ENCODE measurements at regions of chr3 and their contacts with region 1.

Region 1: GRCh38 chr3:52339612-52340011 is 23.5 kb downstream of the DNAH1 start:
- DNase-seq: peak; percentile 64
- H3K4me3 Mint-ChIP-seq: no peak overlapping the region
- H3K27ac Mint-ChIP-seq: no peak overlapping the region
- H3K4me1 Mint-ChIP-seq: peaks cover 3% of the 10 kb centered on the region
- H3K27me3 Mint-ChIP-seq: no peaks in the 10 kb centered on the region

Region 2: GRCh38 chr3:52001443-52001974 is 338.1 kb before region 1 on chr3:
- CTCF ChIA-PET with region 1: interaction called, 5 read pairs
- intact Hi-C with region 1: loop called (anchors 2 kb)
- DNase-seq: peak; percentile 87
- H3K4me3 Mint-ChIP-seq: no peak overlapping the region
- H3K27ac Mint-ChIP-seq: no peak overlapping the region
- H3K4me1 Mint-ChIP-seq: peaks cover 9% of the 10 kb centered on the region
- H3K27me3 Mint-ChIP-seq: no peaks in the 10 kb centered on the region

Region 3: GRCh38 chr3:52220380-52221026 is 119.1 kb before region 1 on chr3:
- CTCF ChIA-PET with region 1: interaction called, 314 read pairs
- intact Hi-C with region 1: loop called (anchors 1 kb)
- DNase-seq: peak; percentile 97
- H3K4me3 Mint-ChIP-seq: no peak overlapping the region
- H3K27ac Mint-ChIP-seq: no peak overlapping the region
- H3K4me1 Mint-ChIP-seq: peaks cover 82% of the 10 kb centered on the region
- H3K27me3 Mint-ChIP-seq: no peaks in the 10 kb centered on the region

Region 4: GRCh38 chr3:52238761-52239701 is 100.6 kb before region 1 on chr3 and contains the start of gene TWF2:
- CTCF ChIA-PET with region 1: interaction called, 147 read pairs
- intact Hi-C with region 1: no loop called
- DNase-seq: peak; percentile 83
- H3K4me3 Mint-ChIP-seq: peak within 1 kb of the TSS; percentile 92
- H3K27ac Mint-ChIP-seq: peak within 1 kb of the TSS; percentile 98
- H3K4me1 Mint-ChIP-seq: peaks cover 75% of the 10 kb centered on the region
- H3K27me3 Mint-ChIP-seq: no peaks in the 10 kb centered on the region
- total RNA-seq, gene TWF2: 89.1 to 91.3 TPM

Region 5: DNA sequence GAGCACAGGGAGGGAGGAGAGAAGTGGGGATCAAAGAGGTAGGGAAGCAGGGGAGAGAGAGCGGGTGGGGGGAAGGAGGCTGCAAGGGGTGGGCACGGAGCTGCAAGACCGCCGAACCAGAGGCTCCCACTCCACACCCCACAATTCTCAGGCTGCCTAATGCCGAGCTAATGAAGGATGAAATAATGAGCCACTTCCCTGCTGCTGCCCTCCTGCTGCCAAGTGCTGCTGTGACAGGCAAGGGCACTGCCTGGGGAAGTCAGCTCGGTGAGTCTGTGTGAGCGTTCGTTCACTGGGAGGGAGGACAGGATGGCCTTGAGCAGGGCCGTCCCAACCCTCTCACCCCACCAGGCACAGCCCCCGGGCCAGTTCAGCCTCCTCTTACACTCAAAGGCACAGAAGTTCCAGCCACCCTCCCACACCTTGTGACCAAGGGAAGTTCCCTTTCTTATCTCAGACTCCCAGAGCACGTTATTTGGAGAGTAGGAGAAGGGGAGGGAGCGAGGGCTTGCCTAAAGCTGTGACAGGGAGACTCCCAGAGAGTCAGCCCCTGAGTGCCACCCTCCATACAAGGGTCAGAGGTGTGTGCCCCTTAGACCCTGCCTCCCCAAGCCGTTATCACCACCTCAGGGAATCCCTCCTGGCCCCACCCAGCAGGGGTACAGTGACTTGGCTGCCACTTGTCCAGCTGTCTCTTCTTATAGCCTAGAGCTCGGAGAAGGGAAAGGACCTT is 39.6 kb before region 1 on chr3:
- CTCF ChIA-PET with region 1: interaction called, 25 read pairs
- intact Hi-C with region 1: no loop called
- DNase-seq: peak; percentile 24
- H3K4me3 Mint-ChIP-seq: no peak overlapping the region
- H3K27ac Mint-ChIP-seq: no peak overlapping the region
- H3K4me1 Mint-ChIP-seq: peaks cover 10% of the 10 kb centered on the region
- H3K27me3 Mint-ChIP-seq: no peaks in the 10 kb centered on the region

Region 6: DNA sequence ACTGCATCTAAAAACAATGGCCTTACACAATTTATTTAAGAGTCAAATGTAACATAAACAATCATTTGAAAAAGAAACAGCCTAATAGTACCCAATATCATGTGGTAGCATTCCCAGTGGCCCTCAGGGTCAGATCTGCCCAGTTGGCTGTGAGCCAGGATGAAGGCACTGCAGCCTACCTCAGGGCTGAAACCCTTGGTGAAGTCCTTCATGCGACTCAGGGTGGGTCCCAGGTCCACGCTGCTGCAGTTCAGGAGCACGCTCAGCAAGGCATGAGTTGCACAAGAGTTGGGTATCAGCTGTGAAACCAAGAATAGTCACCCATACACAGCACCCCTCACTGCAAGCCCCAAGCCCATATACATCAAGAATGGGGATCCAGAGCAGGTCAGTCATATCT is 68.2 kb after region 1 on chr3:
- CTCF ChIA-PET with region 1: interaction called, 10 read pairs
- intact Hi-C with region 1: no loop called
- DNase-seq: no peak
- H3K4me3 Mint-ChIP-seq: peak overlapping the region; percentile 86
- H3K27ac Mint-ChIP-seq: no peak overlapping the region
- H3K4me1 Mint-ChIP-seq: peaks cover 35% of the 10 kb centered on the region
- H3K27me3 Mint-ChIP-seq: no peaks in the 10 kb centered on the region

Region 7: GRCh38 chr3:52570076-52570475 is 230.5 kb after region 1 on chr3:
- CTCF ChIA-PET with region 1: no interaction called
- intact Hi-C with region 1: no loop called
- DNase-seq: no peak
- H3K4me3 Mint-ChIP-seq: no peak overlapping the region
- H3K27ac Mint-ChIP-seq: no peak overlapping the region
- H3K4me1 Mint-ChIP-seq: no peaks in the 10 kb centered on the region
- H3K27me3 Mint-ChIP-seq: no peaks in the 10 kb centered on the region